Activated CD8-positive, alpha-beta T cell treated with anti-CD3 and anti-CD28 coated beads, Interleukin-2, amount 10 ng/mL, durations not matched to agents 7 days and 5 days (primary cell): ENCODE measurements at regions of chr1 and their contacts with region 1.

Region 1: DNA sequence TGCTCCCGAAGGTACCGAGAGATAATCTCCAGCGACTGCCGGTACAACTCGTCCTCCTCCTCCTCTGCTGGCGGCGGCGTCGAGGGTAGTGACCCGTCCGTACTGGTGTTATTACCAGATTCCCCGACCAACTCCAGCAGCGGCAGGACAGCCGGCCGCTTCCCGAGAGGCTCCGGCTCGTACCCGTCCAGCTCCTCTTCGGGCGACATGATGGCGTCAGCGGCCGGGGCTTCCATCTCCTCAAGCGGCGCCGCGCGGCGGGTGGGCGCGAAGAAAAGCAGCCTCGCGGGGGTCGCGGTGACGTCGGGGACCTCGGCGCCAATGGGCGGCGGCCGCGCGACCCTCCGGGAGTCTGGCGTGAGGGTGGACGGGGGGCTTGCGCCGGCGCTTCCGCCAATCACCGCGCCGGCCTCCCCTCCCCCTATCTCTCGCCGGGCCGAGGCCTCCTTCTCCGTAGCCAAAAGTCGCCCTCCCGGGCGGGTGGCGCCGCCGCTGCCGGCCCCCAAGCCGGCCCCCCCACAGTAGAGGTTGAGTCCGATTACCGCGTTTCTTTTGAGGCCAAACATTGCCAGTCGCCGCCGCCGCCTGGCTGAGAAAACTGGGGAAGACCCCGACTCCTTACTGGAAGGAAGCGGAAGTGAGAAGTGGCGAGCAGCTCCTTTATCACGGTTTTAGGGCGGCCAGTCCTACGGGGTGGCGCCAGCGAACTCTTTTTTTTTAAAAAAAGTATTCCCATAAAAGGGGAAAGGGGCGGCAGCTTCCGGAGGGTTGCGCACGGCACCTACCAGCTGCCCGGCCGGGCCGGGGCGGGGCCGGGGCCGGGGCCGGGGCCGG is at the start of gene MCL1:
- DNase-seq: peak; percentile 94
- ATAC-seq: peak; percentile 75
- H3K4me3 Mint-ChIP-seq: peak within 1 kb of the TSS; percentile 97
- H3K27ac Mint-ChIP-seq: peak within 1 kb of the TSS; percentile 98
- H3K4me1 Mint-ChIP-seq: peaks cover 39% of the 10 kb centered on the region
- H3K27me3 Mint-ChIP-seq: no peaks in the 10 kb centered on the region
- total RNA-seq, gene MCL1: 249 to 261 TPM

Region 2: GRCh38 chr1:150363426-150364230 is 215.6 kb before region 1 on chr1 and contains the start of gene RPRD2:
- CTCF ChIA-PET with region 1: no interaction called
- POLR2A ChIA-PET with region 1: interaction called, 12 read pairs
- DNase-seq: peak; percentile 100
- ATAC-seq: peak; percentile 96
- H3K4me3 Mint-ChIP-seq: peak within 1 kb of the TSS; percentile 96
- H3K27ac Mint-ChIP-seq: peak within 1 kb of the TSS; percentile 97
- H3K4me1 Mint-ChIP-seq: peaks cover 18% of the 10 kb centered on the region
- H3K27me3 Mint-ChIP-seq: no peaks in the 10 kb centered on the region
- total RNA-seq, gene RPRD2: 29.5 to 32.5 TPM

Region 3: DNA sequence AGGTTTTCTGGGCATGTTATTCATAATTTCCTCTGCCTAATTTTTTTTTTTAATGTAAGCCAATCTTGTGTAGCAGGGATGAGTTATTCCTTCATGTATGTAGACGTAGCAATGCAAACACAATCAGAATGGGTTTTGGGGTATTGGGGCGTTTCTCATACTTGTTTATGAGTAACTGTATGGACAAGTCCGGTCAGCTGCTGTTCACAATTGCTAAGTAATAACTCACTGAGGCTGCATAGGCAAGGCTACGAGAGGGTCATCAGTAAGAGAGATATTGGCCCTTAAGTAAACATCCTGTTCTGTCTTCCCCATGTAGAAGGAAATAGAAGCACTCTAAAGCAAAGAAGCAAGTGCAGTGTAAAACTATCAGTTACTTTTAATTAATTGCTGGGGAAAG is 101.4 kb before region 1 on chr1:
- CTCF ChIA-PET with region 1: no interaction called
- POLR2A ChIA-PET with region 1: no interaction called
- DNase-seq: no peak
- ATAC-seq: no peak
- H3K4me3 Mint-ChIP-seq: no peak overlapping the region
- H3K27ac Mint-ChIP-seq: no peak overlapping the region
- H3K4me1 Mint-ChIP-seq: no peaks in the 10 kb centered on the region
- H3K27me3 Mint-ChIP-seq: peaks cover 4% of the 10 kb centered on the region

Region 4: DNA sequence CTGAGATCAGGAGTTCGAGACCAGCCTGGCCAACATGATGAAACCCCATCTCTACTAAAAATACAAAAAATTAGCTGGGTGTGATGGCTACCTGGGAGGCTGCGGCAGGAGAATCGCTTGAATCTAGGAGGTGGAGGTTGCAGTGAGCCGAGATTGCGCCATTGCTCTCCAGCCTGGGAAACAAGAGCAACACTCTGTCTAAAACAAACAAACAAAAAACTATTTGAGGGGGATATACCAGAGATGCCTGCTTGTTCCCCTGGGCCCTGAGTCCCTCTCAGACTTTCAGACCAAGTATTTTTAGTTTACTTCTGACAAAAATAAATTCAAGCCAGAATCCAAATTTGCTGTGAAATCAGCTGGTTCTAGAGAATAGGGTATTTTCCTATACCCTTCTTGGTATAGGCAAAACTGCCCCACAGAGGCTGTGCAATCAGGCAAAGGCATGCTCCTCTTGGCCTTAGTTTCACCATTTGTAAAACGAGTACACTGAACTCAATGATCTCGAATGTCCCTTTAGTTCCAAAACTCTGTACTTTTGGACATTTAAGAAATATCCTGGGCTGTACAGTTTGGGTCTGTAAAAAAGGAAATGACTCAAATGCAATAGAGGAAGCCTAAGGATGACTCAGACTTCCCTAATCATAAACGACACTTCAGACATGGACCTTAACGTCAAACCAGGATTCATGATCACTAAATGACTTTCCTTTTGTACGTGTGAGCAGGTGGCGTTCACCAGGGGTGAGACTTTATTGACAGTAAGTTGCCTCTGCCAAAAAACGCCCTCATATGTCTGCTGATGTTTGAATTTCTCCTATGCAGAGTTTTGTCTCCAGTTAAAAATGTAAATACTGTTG is 34.1 kb after region 1 on chr1:
- CTCF ChIA-PET with region 1: interaction called, 20 read pairs
- POLR2A ChIA-PET with region 1: interaction called, 224 read pairs
- DNase-seq: peak; percentile 54
- ATAC-seq: peak; percentile 38
- H3K4me3 Mint-ChIP-seq: peak overlapping the region; percentile 30
- H3K27ac Mint-ChIP-seq: peak overlapping the region; percentile 83
- H3K4me1 Mint-ChIP-seq: peaks cover 61% of the 10 kb centered on the region
- H3K27me3 Mint-ChIP-seq: no peaks in the 10 kb centered on the region

Region 5: DNA sequence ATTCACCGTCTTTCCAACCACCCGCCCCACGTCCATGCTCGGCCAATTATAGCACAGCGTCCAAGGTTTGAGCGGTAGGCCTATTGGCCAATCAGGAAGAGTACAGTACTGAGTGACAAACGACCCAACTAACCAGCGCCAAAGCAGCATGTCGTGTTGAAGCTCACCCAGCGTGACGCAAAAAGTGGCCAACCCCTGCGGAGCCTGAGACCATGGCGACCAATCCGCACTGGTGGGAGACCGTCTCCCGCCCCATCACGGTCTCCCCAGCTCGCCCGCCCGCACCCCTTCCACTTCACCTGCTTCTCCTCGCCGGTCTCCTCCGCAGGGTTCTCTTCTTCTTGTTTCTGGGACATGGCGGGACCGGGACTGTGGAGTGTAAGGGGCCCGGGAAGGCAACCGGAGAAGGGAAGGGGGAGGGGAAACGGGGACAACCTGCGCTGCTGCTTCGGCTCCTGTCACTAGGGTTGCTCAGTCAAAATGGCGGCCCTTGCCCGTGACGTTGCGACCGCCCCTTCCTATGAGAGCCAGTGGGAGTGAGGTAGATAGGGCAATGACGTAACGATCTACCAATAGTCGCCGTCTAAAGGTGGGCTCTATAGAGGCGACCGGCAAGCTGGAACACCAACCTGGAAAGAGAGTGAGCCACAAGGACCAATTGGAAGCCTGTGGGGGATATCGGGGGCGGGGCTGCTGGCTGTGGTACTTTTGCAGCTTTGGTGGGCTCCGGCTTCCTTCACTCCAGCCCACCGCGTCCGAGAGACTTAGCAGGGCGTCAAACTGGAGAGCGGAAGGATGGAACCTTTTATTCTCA is 50.1 kb after region 1 on chr1 and contains the start of gene ENSA:
- CTCF ChIA-PET with region 1: interaction called, 6 read pairs
- POLR2A ChIA-PET with region 1: interaction called, 224 read pairs
- DNase-seq: peak; percentile 98
- ATAC-seq: peak; percentile 91
- H3K4me3 Mint-ChIP-seq: no peak within 1 kb of the TSS
- H3K27ac Mint-ChIP-seq: no peak within 1 kb of the TSS
- H3K4me1 Mint-ChIP-seq: peaks cover 19% of the 10 kb centered on the region
- H3K27me3 Mint-ChIP-seq: no peaks in the 10 kb centered on the region
- total RNA-seq, gene ENSA: 208 to 214 TPM

Region 6: GRCh38 chr1:150661156-150661555 is 82.0 kb after region 1 on chr1:
- CTCF ChIA-PET with region 1: no interaction called
- POLR2A ChIA-PET with region 1: no interaction called
- DNase-seq: no peak
- ATAC-seq: no peak
- H3K4me3 Mint-ChIP-seq: no peak overlapping the region
- H3K27ac Mint-ChIP-seq: no peak overlapping the region
- H3K4me1 Mint-ChIP-seq: no peaks in the 10 kb centered on the region
- H3K27me3 Mint-ChIP-seq: no peaks in the 10 kb centered on the region